MCF 10A (cell line): ENCODE measurements at regions of chr22 and their contacts with region 1.

Region 1: DNA sequence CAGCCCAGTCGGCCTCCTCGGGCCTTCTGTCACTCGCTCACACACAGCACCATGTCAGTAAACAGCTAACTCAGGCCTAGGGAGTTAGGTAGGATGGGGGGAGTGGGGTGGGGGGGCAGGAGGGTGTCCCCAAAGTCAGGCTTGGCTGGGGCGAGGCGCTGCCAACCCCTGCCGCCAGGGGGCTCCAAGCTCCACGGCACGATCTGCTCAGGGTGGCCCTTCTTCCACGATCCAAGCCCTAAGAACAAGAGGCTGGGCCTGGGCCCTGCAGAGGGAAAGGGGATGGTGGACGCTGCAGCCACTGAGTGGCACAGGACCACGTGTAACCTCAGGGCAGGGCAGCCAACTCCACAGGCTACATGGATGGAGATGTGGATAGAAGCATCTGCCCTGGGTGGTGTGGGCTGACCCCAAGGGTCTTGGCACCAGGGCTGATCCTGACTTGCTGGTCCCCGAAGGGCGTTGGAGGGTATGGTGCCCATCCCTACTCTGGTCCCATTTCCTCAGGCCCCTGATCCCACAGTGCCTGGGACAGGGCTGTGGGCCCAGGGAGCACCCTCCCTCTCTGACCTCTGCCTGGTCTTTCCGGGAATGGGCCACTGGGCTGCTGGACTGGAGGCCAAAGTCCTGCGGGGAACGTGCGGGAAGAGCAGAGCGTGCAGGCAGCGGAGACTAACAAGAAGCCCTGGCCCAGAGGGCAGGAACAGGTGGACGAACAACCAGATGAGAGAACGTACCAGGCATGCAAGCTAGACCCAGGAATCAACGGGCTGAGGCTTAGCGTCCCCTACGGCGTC is 29.1 kb upstream of the TXNRD2 start:
- DNase-seq: peak; percentile 68
- H3K4me3 Mint-ChIP-seq: no peak overlapping the region
- H3K27ac Mint-ChIP-seq: no peak overlapping the region
- H3K4me1 Mint-ChIP-seq: peaks cover 7% of the 10 kb centered on the region
- H3K27me3 Mint-ChIP-seq: no peaks in the 10 kb centered on the region
- CTCF ChIP-seq: peak; percentile 97

Region 2: GRCh38 chr22:20027966-20028854 is 57.5 kb after region 1 on chr22:
- CTCF ChIA-PET with region 1: interaction called, 3 read pairs
- POLR2A ChIA-PET with region 1: no interaction called
- intact Hi-C with region 1: loop called (anchors 1 kb)
- DNase-seq: peak; percentile 44
- H3K4me3 Mint-ChIP-seq: no peak overlapping the region
- H3K27ac Mint-ChIP-seq: no peak overlapping the region
- H3K4me1 Mint-ChIP-seq: no peaks in the 10 kb centered on the region
- H3K27me3 Mint-ChIP-seq: no peaks in the 10 kb centered on the region
- CTCF ChIP-seq: peak; percentile 35

Region 3: DNA sequence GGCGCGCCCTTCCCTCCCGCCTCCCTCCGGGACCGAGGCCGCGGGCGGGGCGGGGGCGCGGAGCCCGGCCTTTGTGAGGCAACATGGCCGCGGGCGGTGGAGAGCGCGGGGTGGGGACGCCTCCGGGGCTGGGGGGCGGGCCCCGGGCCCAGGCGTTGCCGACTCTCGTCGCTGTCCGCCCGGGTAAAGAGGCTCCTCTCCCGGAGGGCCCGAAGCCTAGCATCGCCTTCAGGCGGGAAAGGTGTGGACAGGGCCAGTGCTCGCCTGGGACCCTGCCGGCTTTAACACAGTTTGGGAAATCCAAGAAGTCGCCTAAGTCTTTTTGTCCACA is 109.7 kb after region 1 on chr22:
- CTCF ChIA-PET with region 1: no interaction called
- POLR2A ChIA-PET with region 1: no interaction called
- intact Hi-C with region 1: loop called (anchors 1 kb)
- DNase-seq: peak; percentile 51
- H3K4me3 Mint-ChIP-seq: peak overlapping the region; percentile 92
- H3K27ac Mint-ChIP-seq: peak overlapping the region; percentile 79
- H3K4me1 Mint-ChIP-seq: peaks cover 31% of the 10 kb centered on the region
- H3K27me3 Mint-ChIP-seq: no peaks in the 10 kb centered on the region
- CTCF ChIP-seq: no peak

Region 4: DNA sequence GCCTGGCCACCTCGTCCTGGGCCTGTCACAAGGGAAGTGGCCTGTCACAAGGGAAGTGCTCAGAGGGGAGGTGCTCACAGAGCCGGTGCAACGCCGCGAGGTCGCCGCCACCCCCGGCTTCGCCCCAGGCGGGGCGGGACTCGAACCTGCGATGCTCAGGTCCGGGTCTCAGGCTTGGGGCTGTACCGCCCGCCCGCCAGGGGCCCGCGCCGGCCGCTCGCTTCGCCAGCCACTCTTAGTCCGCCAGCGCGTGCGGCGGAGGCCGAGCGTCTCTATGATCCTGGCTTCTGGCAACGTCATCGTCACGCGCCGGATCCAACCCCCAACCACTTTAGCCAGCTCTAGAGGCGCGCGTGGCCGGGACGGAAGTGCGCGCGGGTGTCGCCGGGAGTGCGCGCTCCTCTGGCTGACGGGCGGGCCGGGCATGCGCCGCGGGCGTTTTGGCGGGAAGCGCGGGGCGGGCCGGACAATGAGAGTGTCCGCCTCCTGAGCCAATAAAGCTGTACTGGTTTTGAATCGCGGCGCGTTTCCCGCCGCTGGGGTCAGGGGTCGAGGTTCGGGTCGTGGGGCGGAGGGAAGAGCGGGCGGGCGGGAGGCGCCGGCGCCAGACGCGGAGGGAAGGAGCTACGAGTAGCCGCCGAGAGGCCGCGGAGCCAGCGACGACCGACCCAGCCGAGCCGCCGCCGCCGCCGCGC is 146.4 kb after region 1 on chr22 and contains the start of gene TRMT2A:
- CTCF ChIA-PET with region 1: interaction called, 4 read pairs
- POLR2A ChIA-PET with region 1: interaction called, 3 read pairs
- intact Hi-C with region 1: loop called (anchors 10 kb)
- DNase-seq: peak; percentile 97
- H3K4me3 Mint-ChIP-seq: peak within 1 kb of the TSS; percentile 85
- H3K27ac Mint-ChIP-seq: peak within 1 kb of the TSS; percentile 84
- H3K4me1 Mint-ChIP-seq: peaks cover 9% of the 10 kb centered on the region
- H3K27me3 Mint-ChIP-seq: no peaks in the 10 kb centered on the region
- CTCF ChIP-seq: no peak
- total RNA-seq, gene TRMT2A: 39.0 and 47.1 TPM in 2 replicates